ENCODE measurements at regions of chr15 and their contacts with region 1.

Region 1: DNA sequence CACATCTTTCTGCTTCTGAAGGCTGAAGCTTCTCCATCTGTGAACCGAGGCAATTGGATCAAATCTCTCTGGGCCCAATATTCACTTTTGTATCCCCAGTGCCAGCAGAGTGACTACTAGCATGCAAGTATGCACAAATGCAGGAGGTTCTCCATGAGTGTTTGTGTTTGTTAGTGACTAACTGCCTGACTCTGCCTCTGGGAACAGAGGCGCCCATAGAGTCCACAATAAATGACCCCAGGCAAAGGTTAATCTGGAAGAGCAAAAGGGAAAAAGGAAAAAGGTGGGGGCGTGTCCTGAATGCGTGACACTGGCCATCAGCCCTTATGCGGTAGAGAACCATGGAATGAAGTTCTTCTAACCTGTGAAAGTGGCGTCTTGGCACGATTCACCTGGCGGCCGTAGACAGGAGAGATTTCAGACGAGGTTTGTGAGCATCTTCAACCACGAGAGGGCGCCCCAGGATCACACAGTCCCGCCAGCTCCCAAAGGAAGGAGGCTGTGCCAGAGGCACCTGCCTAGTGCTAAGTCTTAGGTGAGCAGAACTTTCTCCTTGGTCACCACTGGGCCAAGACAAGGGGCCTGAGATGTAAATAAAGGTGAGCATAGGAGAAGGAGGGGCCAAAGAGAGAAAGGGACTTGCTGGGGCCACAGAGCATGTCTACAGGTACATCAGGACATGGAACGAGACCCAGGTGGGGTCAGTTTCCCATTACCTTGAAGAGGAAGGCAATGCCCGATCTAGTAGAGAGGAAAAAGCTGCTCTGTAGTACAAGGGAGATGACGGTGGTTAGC is 44.2 kb downstream of the RBPMS2 start:
- DNase-seq: peak; percentile 59
- ATAC-seq: peak; percentile 80
- H3K4me3 ChIP-seq: no peak overlapping the region
- H3K27ac ChIP-seq: no peak overlapping the region
- H3K4me1 ChIP-seq: no peaks in the 10 kb centered on the region
- H3K27me3 ChIP-seq: no peaks in the 10 kb centered on the region
- CTCF ChIP-seq: peak; percentile 92
- POLR2A ChIP-seq: 0 out of 2 replicates have a peak, but pooled peaks have one; percentile 29
- RAD21 ChIP-seq: peak; percentile 96

Region 2: DNA sequence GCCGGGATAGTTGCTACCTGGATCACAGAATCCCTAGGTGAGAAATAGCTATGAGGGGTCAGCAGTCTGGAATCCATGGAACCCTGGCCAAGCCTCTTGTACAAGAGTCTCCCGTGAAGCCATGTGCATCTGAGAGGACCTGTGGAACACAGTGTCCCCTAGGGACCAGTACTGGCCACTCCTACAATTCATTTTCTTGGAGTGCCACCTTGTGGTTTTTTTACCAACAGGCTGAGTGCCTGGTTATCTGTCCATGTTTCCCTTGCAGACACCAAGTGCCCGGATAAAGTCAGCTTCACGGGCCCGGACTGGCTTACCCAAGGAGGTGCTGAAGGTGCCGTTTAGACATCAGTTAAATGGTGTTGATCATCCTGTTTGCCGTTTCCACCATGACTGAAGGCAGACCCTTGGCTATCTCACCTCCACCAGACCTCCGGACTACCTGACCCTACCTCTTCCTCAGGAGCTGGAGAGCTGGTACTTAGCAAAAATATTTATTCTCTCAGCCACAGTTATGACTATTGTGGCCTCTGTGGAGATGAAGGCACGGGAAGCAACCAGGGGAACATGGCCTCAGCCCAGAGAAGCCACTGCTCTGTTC is 49.7 kb before region 1 on chr15:
- CTCF ChIA-PET with region 1: interaction called, 16 read pairs
- POLR2A ChIA-PET with region 1: no interaction called
- dilution Hi-C with region 1: no loop called
- in situ Hi-C with region 1: loop called (anchors 5 kb)
- intact Hi-C with region 1: loop called (anchors 1 kb)
- DNase-seq: peak; percentile 65
- ATAC-seq: peak; percentile 83
- H3K4me3 ChIP-seq: no peak overlapping the region
- H3K27ac ChIP-seq: no peak overlapping the region
- H3K4me1 ChIP-seq: peaks cover 3% of the 10 kb centered on the region; the same call in 1 of the 2 replicates
- H3K27me3 ChIP-seq: no peaks in the 10 kb centered on the region
- CTCF ChIP-seq: peak; percentile 92
- POLR2A ChIP-seq: no peak
- RAD21 ChIP-seq: peak; percentile 84

Region 3: GRCh38 chr15:65783872-65784271 is 1052.7 kb after region 1 on chr15:
- CTCF ChIA-PET with region 1: no interaction called
- POLR2A ChIA-PET with region 1: no interaction called
- dilution Hi-C with region 1: no loop called
- in situ Hi-C with region 1: no loop called
- intact Hi-C with region 1: no loop called
- DNase-seq: no peak
- ATAC-seq: no peak
- H3K4me3 ChIP-seq: no peak overlapping the region
- H3K27ac ChIP-seq: no peak overlapping the region
- H3K4me1 ChIP-seq: peaks cover 2% of the 10 kb centered on the region; the same call in 1 of the 2 replicates
- H3K27me3 ChIP-seq: no peaks in the 10 kb centered on the region
- CTCF ChIP-seq: no peak
- POLR2A ChIP-seq: no peak
- RAD21 ChIP-seq: no peak